ENCODE measurements at regions of chr5 and their contacts with region 1.

Region 1: DNA sequence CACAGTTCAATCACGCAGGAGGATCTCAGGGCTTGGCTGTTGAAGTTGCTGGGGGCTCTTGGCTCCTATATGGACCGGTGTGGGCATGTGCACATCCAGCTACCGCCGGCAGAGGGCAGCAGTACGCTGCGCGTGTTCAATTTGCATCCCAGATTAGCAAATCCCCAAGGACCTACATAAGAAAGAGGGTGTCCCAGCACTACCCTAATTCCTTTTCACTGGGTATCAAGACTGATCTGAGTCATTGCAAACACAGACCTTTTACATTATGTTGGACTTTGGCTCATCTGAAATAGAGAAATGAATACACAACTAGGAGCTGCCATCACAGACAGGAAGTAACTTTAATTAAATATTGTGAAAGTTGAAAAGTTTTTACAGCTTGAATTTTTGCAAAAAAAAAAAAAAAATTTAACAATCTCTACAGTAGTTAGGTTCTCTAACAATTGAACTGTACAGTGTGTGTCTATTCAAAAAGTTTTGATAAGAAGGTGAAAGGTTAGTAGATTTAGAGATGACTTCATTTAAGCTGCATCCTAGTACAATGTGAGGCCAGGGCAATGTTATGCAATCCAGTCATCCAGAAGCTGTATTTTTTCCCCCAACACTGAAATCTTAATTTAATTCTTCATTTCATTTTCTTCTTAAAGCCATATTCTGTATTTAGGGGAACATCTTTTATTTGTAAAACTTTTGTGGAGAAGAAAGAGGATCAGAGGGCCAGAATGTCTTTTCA is 404.0 kb downstream of the EBF1 start:
- DNase-seq: peak; percentile 91
- H3K4me3 ChIP-seq: no peak overlapping the region
- H3K27ac ChIP-seq: peak overlapping the region in 6 of 8 donors; percentile 6 to 25 (median 17)
- H3K4me1 ChIP-seq: peaks cover 0 to 18% (median 11%) of the 10 kb centered on the region in 6 donors
- H3K27me3 ChIP-seq: peaks cover 0 to 6% (median 0%) of the 10 kb centered on the region in 7 donors
- CTCF ChIP-seq: peak; percentile 79 to 97 (median 94)
- POLR2A ChIP-seq: no peak

Region 2: GRCh38 chr5:158174918-158175851 is 520.6 kb before region 1 on chr5:
- intact Hi-C with region 1: loop called (anchors 10 kb)
- DNase-seq: peak; percentile 81
- H3K4me3 ChIP-seq: no peak overlapping the region
- H3K27ac ChIP-seq: no peak overlapping the region
- H3K4me1 ChIP-seq: peaks cover 0 to 22% (median 0%) of the 10 kb centered on the region in 6 donors
- H3K27me3 ChIP-seq: no peaks in the 10 kb centered on the region
- CTCF ChIP-seq: peak; percentile 47 to 82 (median 73)
- POLR2A ChIP-seq: no peak